Cardiac septum (tissue), 1 donor: ENCODE measurements at regions of chr12 and their contacts with region 1.

Region 1: DNA sequence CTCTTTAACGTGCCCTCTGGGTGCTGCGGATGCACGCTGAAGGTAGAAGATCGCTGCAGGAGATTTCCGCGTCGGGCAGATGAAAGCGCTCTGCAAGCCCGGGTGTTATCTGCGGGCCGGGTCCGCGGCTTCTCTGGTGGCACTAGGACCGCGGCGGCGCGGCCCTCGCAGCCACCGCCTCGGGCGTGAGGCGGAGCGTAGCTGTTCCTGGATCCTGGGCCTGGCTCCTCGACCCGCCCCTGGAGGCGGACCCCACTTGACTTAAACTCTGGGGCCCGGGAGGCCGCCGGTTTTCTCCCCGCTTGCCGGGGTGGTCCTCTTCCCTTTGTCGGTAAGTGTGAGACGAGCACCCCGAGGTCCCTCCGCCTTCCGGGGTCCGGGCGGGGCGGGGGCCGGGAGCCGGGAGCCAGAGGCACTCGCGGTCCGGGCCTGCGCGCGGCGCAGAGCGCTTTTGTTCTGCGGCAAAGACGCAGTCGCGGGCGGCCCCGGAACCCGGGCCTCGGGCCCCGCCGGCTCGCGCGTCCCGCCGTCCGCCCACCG is at the start of gene RESF1:
- DNase-seq: peak; percentile 96
- total RNA-seq, gene RESF1: 17.3 TPM

Region 2: DNA sequence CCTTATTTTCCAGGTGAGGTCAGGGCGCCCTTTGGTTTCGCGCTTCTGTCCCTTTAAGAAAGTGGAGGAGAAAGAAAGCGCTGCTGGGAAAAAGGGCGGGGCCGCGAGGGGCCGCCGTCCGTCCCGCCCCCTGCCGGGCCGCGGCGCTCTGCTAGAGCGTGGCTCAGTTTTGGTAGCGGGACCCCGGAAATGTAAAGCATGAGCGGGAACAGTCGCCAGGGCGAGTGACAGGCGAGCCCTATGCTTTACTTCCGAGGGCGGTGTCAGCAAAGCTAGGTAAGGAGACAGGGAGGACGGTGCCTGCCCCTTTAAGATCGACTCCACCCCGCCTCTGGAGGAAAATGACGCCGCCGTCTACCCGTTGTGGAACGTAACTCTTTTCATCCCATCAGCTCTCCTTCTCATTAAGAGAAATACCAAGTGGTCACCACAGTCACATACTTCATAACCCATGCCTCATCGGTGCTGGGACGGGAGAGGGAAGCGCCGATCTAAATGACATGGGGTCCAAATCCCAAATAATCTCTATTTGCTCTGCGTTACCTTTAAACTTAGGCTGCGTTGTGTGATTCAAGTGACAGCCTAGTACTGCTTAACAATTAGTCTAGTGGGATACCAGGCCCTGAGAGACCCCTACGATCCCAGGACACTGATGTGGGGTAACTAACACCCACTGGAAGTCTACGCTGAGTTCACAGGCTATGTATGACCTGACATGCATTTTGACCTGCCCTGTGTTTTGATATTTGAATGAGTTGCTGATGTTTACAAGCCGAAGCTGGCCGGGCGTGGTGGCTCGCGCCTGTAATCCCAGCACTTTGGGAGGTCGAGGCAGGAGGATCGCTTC is 299.9 kb before region 1 on chr12 and contains the start of gene ETFBKMT:
- intact Hi-C with region 1: loop called (anchors 2 kb)
- DNase-seq: peak; percentile 92
- total RNA-seq, gene ETFBKMT: 5.7 TPM

Region 3: DNA sequence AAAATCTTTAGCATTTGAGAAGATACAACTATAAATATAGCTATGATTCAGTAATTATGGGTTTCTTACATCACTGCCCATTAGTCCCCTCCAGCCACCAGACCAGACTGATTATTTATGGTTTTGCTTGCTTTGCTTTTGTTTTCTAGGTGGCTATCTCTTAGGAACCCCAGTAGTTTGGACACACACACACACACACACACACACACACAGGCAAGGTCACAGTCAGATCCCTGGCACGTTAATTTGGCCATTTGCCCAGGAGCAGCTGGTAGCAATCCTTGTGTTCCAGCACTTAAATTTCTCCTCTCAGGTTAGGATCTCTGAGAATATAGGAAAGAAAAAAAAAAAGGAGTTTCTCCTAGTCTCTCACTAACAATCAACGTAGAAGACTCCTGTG is 90.3 kb before region 1 on chr12:
- intact Hi-C with region 1: loop called (anchors 5 kb)
- DNase-seq: no peak

Region 4: GRCh38 chr12:32106517-32107358 is 147.5 kb after region 1 on chr12 and contains the start of gene BICD1:
- intact Hi-C with region 1: loop called (anchors 5 kb)
- DNase-seq: peak; percentile 95
- total RNA-seq, gene BICD1: 19.8 TPM